Activated CD8-positive, alpha-beta T cell treated with anti-CD3 and anti-CD28 coated beads for 36 hours (primary cell): ENCODE measurements at regions of chr2 and their contacts with region 1.

Region 1: DNA sequence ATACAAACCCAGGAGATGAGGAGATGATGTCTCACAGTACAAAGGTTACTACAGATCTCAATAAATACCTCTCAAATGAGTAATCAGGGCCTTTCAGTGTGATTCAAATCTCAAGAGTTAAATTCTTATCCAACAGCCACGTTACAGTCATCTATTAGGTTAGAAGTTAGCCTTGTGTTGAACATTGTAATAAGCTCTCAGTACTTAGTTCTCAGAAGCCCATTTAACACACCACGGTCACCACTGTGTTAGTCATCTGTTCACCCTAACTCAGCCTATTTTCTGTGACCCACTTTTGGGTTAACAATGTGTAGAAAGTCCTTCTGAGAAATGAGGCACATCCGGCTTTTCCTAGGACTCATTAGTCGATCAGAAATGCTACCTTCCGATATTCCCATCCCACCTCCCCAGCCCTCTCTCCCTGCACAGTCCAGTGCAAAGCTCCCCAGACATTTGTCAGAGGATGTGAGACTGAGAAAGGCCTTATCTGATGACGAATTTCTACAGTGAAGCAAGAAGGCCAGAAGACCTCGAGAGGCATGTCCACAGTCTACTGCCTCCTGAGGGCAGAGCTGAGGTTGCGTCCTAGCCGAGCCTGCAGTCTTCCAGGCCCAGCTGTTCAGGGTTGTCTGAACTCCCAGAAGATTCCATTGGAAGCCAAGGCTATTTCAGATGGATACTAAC is 92.6 kb downstream of the ACTR2 start:
- DNase-seq: peak; percentile 48
- ATAC-seq: peak; percentile 87
- H3K4me3 Mint-ChIP-seq: no peak overlapping the region
- H3K27ac Mint-ChIP-seq: peak overlapping the region; percentile 64
- H3K4me1 Mint-ChIP-seq: peaks cover 20% of the 10 kb centered on the region
- H3K27me3 Mint-ChIP-seq: no peaks in the 10 kb centered on the region
- CTCF ChIP-seq: no peak

Region 2: DNA sequence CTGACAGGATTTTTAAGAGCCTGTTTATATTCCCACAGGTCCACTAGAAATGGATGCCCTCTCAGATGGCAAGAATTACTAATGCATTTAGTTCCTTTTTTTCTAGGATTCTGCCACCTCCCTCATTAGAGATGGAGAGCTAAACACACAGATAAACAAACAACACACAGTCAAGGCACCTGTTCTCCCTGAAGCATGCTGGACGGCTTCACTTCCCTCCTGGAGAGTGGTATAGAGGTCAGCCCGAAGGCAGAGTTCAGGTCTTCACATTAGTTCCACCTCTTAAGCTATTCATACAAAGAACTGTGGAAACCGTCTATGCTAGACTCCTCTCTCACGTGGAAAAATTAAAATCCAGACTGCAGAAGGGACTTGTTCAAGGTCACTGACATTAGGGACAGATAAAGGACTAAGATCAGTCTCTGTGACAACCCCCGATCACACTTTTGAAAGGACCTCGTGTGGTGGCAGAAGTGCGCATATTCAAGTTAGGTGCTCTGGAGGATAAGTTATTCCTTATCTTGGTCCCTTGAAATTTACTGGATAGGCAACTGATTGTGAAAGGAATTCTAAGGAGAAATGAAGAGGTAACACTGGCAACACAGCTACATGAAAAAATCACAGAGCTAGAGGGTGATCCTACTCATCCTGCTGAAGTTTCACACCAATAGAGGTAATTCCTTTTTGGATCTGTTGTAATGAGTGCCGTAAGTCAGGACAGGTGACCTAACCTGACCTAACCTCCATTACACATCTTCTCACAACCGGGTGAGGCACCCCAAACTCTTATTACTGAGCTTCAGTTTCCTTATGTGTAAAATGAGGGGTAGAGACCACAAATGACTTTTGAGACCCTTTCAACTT is 37.1 kb after region 1 on chr2:
- CTCF ChIA-PET with region 1: interaction called, 11 read pairs
- POLR2A ChIA-PET with region 1: interaction called, 6 read pairs
- intact Hi-C with region 1: no loop called
- DNase-seq: peak; percentile 39
- ATAC-seq: peak; percentile 71
- H3K4me3 Mint-ChIP-seq: no peak overlapping the region
- H3K27ac Mint-ChIP-seq: peak overlapping the region; percentile 36
- H3K4me1 Mint-ChIP-seq: peaks cover 38% of the 10 kb centered on the region
- H3K27me3 Mint-ChIP-seq: peaks cover 6% of the 10 kb centered on the region
- CTCF ChIP-seq: no peak